HCT116 (cell line): ENCODE measurements at regions of chr12 and their contacts with region 1.

Region 1: DNA sequence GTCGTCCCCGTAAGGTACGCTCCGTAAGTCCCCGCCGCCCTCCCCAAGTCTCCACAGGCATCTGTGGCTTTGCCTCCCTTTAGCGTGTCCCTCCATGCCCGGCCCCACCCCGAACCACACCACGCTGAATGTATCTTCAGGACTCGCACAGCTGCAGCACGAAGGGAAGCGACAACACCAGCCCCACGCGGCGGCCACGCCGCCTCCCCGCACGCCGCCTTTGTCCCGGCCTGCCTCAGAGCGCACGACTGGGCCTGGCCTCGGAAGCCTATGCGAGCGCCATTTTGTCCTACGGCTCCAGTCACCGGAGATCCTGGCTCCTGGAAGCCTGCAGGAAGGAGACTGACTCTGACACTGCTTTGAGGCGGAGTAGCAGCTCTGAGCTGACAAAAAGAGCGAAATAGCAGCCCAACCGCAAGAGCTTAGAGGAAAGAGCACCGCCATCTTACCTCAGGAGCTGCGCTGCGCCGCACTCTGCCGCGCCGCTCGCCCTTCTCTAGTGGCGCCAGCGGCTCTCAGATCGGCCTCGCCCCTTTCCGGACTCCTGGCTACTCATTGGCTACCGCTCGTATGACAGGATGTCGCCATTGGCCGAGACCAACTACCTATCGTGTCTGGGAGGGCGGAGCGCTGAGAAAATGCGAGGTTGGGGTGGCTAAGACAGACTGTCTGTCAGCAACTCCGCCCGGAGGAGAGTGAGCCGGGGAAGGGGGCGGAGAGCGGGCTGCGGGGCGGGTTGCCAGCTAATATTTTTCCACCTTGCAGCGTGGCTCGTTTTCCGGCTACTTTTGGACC is at the start of gene KANSL2:
- DNase-seq: peak; percentile 95
- ATAC-seq: peak; percentile 98
- H3K4me3 ChIP-seq: peak within 1 kb of the TSS; percentile 98 to 99
- H3K27ac ChIP-seq: peak within 1 kb of the TSS; percentile 82
- H3K4me1 ChIP-seq: peaks cover 7 to 22% of the 10 kb centered on the region in 2 experiments
- H3K27me3 ChIP-seq: no peaks in the 10 kb centered on the region
- CTCF ChIP-seq: no peak
- POLR2A ChIP-seq: peak; percentile 93
- RAD21 ChIP-seq: no peak
- total RNA-seq, gene KANSL2: 41.6 TPM

Region 2: DNA sequence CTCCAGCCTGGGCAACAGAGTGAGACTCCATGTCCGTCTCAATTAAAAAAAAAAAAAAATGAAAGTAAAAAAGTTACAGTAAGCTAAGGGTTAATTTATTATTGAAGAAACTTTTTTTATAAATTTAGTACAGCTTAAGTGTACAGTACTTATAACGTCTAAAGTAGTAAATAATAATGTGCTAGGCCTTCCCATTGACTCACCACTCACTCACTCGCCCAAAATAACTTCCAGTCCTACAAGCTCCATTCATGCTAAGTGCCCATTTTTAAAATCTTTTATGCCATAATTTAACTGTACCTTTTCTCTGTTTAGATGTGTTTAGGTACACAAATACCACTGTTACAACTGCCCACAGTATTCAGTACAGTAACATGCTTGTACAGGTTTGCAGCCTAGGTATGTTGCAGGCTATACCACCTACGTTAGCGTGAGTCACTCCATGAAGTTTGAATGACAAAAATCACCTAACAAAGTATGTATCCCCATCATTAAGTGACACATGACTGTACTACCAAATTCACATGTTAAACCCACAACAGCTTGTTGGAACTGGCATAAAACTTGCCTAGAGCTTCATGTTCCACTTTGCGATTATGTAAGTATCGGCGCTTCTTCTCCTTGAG is 10.6 kb before region 1 on chr12:
- CTCF ChIA-PET with region 1: no interaction called
- POLR2A ChIA-PET with region 1: interaction called, 16 read pairs
- RAD21 ChIA-PET with region 1: no interaction called
- intact Hi-C with region 1: no loop called
- DNase-seq: no peak
- ATAC-seq: no peak
- H3K4me3 ChIP-seq: no peak overlapping the region
- H3K27ac ChIP-seq: no peak overlapping the region
- H3K4me1 ChIP-seq: no peaks in the 10 kb centered on the region
- H3K27me3 ChIP-seq: no peaks in the 10 kb centered on the region
- CTCF ChIP-seq: no peak
- POLR2A ChIP-seq: no peak
- RAD21 ChIP-seq: no peak

Region 3: GRCh38 chr12:48716493-48717251 is 34.7 kb after region 1 on chr12 and contains the start of gene CCNT1:
- CTCF ChIA-PET with region 1: no interaction called
- POLR2A ChIA-PET with region 1: interaction called, 3 read pairs
- RAD21 ChIA-PET with region 1: no interaction called
- intact Hi-C with region 1: loop called (anchors 2 kb)
- DNase-seq: peak; percentile 100
- ATAC-seq: peak; percentile 95
- H3K4me3 ChIP-seq: peak within 1 kb of the TSS; percentile 81 to 97
- H3K27ac ChIP-seq: peak within 1 kb of the TSS; percentile 89
- H3K4me1 ChIP-seq: peaks cover 4 to 20% of the 10 kb centered on the region in 2 experiments; a peak in 3 of 4 replicates
- H3K27me3 ChIP-seq: no peaks in the 10 kb centered on the region
- CTCF ChIP-seq: peak in 2 of 3 experiments; percentile 10 to 26; a peak in 2 of 6 replicates
- POLR2A ChIP-seq: peak; percentile 74
- RAD21 ChIP-seq: no peak
- total RNA-seq, gene CCNT1: 69.4 TPM